ENCODE measurements at regions of chr12 and their contacts with region 1.

Region 1: DNA sequence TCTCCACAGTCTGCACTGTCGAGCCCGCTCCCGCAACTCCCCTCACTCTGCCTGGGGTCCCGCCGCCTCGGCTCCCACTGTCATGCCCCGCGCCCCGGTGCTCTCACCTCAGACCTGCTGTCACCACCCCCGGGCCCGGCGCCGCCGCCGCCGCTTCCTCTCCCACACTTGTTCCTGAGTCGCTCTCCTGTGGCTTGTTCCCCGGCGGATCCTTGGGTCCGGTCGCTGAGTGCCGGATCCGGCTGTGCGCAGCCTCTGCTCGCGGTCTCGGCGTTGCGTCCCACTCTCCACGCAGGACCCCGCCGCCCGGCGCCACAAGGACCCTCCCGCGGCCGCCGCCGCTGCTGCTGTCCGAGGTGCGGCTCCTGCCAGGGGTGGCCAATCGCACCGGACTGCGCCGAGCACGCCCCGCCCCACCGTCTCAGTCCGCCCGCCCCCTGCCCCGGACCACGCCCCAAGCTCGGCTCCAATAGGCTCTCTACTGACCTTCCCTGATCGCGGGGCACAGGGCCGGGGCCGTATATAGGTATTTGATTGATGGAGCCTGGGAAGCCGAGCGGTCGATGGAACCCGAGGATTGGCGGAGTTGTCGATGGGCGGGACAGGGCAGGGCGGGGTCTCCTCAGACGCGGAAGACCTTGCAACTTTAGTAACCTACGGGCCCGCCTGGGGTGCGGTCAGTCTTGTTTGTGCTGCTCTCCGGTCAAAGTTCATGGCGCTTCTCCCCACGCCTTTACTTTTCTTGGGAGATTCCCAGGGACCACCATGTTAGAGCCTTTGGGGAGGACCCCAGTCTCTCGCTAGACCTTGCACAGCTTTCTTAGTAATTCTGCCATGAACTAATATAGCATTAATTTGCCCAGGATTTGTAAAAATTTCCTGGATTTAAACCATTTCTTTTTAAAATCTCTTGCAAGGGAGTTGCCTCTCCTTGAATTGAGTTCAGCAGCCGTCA is at the start of gene TAOK3:
- DNase-seq: peak; percentile 98
- H3K4me3 Mint-ChIP-seq: peak within 1 kb of the TSS; percentile 98
- H3K27ac Mint-ChIP-seq: peak within 1 kb of the TSS; percentile 99
- H3K4me1 Mint-ChIP-seq: peaks cover 14% of the 10 kb centered on the region
- H3K27me3 Mint-ChIP-seq: no peaks in the 10 kb centered on the region
- CTCF ChIP-seq: no peak
- total RNA-seq, gene TAOK3: 24.8 and 28.6 TPM in 2 replicates

Region 2: DNA sequence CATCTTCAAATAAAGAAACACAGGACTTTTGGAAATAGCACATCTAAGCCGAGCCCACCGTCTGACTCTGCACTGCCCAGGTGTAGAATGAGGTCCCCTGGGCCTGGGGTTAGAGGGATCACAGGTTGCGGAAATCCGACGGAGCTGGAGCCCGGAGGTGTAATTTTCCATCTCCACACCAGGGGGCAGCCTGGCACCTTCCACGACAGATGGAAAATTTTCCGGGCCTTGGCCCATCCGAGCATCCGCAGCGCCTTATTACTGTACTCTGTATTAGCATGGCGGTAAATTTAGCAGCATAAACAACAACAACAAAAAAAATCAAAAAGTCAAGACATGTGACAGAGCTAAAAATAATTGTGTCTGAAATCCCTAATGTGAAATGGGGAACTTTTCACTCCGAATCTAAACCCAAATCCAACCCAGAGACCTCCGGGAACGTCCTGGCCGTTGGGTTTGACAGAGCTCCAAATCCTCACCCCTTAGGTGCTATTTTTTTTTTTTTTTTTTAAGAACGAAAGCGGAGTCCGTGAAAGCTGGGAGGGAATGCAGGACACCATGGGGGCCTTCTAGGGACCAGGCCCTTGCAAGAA is 497.9 kb before region 1 on chr12:
- CTCF ChIA-PET with region 1: interaction called, 12 read pairs
- POLR2A ChIA-PET with region 1: no interaction called
- intact Hi-C with region 1: loop called (anchors 1 kb)
- DNase-seq: peak; percentile 66
- H3K4me3 Mint-ChIP-seq: no peak overlapping the region
- H3K27ac Mint-ChIP-seq: no peak overlapping the region
- H3K4me1 Mint-ChIP-seq: no peaks in the 10 kb centered on the region
- H3K27me3 Mint-ChIP-seq: peaks cover 7% of the 10 kb centered on the region
- CTCF ChIP-seq: peak; percentile 88

Region 3: DNA sequence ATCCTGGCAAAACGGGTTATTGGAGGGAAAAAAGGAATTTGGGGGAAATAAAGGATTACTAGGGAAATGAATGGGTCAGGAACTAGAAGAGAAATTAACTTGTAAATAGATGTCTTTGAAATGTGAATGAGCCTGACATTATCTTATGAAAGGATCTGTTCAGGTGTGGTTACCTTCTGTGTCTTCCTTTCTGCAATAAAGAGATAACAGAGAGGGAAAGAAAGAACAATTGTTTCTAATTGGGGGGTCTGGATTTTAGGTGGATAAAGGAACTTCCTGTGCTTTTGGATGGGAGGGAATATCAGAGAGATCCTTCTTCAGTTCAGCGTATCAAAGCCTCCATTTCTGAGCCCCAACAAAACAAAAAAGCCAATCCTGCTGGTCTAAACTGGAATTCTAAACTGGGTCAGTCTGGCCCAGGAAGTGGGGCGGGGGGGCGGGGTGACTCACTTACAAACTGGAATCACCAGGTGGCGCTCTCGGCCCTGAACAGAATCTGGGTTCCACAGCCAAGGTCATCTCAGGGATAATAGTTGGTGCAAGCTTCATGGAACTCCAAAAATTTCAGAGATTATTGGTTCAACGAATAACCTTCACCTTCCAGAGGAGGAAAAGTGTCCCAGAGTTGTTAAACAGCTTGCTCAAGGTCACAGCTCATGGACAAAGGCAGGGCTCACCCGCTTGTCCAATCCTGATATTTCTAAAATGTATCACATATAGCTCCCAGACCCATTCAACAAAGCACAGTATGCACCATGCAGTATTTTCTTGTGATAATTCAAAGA is 252.0 kb before region 1 on chr12:
- CTCF ChIA-PET with region 1: interaction called, 53 read pairs
- POLR2A ChIA-PET with region 1: interaction called, 3 read pairs
- intact Hi-C with region 1: loop called (anchors 2 kb)
- DNase-seq: peak; percentile 78
- H3K4me3 Mint-ChIP-seq: no peak overlapping the region
- H3K27ac Mint-ChIP-seq: peak overlapping the region; percentile 32
- H3K4me1 Mint-ChIP-seq: peaks cover 5% of the 10 kb centered on the region
- H3K27me3 Mint-ChIP-seq: no peaks in the 10 kb centered on the region
- CTCF ChIP-seq: peak; percentile 78

Region 4: DNA sequence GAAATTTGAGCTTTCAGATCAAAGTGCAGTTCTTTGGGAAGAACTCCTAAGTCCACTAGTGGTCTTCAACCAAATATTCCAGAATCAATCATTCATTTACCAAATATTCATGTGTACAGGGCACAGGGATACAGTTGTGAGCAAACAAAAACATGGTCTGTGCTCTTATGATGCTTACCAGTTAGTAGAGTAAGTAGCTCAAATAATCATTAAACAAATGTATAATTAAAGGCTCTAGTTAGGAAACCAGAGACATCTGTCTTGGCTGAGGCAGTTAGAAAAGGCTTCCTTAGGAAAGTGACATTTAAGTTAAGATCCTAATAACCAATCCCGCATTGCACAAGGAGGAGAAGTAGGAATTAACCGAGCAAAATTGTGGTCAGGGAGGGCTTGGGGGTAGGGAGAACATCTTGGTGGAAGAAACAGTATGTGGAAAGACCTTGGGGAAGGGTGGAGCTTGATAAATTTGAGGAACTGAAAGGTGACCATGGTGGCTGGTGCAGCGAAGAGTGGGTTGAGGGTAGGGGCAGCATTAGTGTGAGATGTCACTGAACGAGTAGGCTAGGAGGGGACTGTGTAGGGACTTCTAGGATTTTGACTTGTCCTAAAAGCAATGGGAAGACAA is 196.9 kb before region 1 on chr12:
- CTCF ChIA-PET with region 1: interaction called, 422 read pairs
- POLR2A ChIA-PET with region 1: interaction called, 89 read pairs
- intact Hi-C with region 1: no loop called
- DNase-seq: no peak
- H3K4me3 Mint-ChIP-seq: no peak overlapping the region
- H3K27ac Mint-ChIP-seq: no peak overlapping the region
- H3K4me1 Mint-ChIP-seq: no peaks in the 10 kb centered on the region
- H3K27me3 Mint-ChIP-seq: no peaks in the 10 kb centered on the region
- CTCF ChIP-seq: no peak

Region 5: DNA sequence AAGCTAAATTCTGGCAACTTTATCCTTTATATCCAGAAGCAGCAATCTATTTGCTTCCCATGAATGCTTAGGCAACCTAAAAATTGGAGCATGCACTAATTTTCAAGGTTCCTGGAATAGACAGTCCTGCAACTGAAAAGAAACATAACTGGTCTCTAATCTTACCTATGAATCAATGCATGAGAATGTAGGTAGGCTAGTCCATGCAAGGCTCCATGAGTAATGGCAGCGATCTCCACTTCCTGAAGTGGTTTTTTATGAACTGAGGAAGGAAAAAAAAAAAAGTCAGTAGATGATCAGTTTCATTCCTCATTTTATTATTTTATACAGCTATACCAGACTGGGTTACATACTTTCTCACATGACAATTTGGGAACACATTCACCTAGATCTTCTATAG is 134.9 kb before region 1 on chr12:
- CTCF ChIA-PET with region 1: interaction called, 13 read pairs
- POLR2A ChIA-PET with region 1: interaction called, 8 read pairs
- intact Hi-C with region 1: loop called (anchors 2 kb)
- DNase-seq: peak; percentile 32
- H3K4me3 Mint-ChIP-seq: no peak overlapping the region
- H3K27ac Mint-ChIP-seq: peak overlapping the region; percentile 84
- H3K4me1 Mint-ChIP-seq: peaks cover 16% of the 10 kb centered on the region
- H3K27me3 Mint-ChIP-seq: no peaks in the 10 kb centered on the region
- CTCF ChIP-seq: no peak

Region 6: GRCh38 chr12:118330421-118331018 is 42.3 kb before region 1 on chr12:
- CTCF ChIA-PET with region 1: interaction called, 10 read pairs
- POLR2A ChIA-PET with region 1: no interaction called
- intact Hi-C with region 1: no loop called
- DNase-seq: no peak
- H3K4me3 Mint-ChIP-seq: no peak overlapping the region
- H3K27ac Mint-ChIP-seq: peak overlapping the region; percentile 20
- H3K4me1 Mint-ChIP-seq: peaks cover 6% of the 10 kb centered on the region
- H3K27me3 Mint-ChIP-seq: no peaks in the 10 kb centered on the region
- CTCF ChIP-seq: no peak

Region 7: DNA sequence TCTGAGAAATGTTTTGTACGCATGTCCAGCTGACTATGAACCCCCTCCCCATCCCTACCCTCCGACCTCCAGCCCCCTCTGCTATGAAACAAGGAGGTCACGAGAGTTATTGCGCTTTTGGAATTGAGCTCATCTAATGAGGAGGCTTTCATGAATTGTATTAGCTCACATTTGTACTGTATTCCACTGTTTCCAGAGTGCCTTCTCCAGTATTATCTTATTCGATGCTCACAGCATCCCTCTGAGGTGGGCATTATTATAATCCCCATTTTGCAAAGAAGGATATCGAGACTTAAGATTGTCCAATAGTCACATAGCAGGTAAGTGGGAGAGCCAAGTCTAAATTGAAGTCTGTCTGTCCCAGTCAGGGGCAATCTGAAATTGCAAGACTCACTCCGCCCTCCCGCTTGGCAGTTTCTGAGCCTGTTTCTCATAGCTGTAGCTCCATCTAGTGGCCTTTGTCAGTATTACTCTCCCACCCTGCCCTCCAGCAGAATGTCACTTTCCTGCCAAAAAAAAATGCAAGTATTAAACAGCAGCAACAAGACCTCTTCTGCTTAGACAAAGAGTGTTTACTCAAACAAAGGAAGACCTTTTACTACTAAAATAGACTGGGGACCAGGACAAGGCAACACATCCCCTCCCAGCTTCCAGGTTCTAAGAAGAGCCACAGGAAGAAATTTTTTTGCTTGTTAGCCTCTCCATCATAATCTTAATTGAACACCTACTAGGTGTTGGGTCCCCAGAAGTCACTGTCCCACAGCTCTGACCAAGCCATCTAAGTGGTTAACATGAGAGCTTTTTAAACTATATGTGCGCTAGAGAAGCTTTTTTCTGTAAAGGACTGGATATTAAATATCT is 1172.2 kb after region 1 on chr12:
- CTCF ChIA-PET with region 1: interaction called, 44 read pairs
- POLR2A ChIA-PET with region 1: no interaction called
- intact Hi-C with region 1: loop called (anchors 1 kb)
- DNase-seq: peak; percentile 70
- H3K4me3 Mint-ChIP-seq: no peak overlapping the region
- H3K27ac Mint-ChIP-seq: no peak overlapping the region
- H3K4me1 Mint-ChIP-seq: no peaks in the 10 kb centered on the region
- H3K27me3 Mint-ChIP-seq: peaks cover 48% of the 10 kb centered on the region
- CTCF ChIP-seq: peak; percentile 91

Measured in MCF 10A (cell line).